Dendritic cell treated with granulocyte-macrophage colony-stimulating factor and Interleukin-4, amounts not matched to agents 40 ng/mL and 50 ng/mL, for 4 days (primary cell): ENCODE measurements at regions of chr22 and their contacts with region 1.

Region 1: DNA sequence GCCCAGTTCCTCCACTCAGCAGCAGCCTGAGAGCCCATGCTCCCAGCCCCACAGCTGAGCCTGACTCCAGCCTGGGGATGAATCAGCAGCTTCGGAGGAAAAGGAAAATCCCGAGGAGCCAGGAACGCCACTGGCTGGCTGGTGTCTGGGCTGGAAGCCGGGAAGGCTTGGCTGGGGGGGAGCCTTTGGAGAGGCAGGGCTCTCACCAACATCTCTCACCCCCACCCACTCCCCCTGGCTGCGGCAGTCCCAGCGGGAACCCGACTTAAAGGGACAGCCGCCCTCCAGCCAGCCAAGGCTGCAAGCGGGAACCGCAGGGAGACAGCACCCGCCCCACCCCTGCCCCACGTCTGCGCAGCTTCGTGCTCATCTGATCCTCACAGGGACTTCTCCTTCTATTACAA is 28.4 kb downstream of the KIAA0930 start:
- H3K4me3 Mint-ChIP-seq: peak overlapping the region; percentile 53
- H3K27ac Mint-ChIP-seq: peak overlapping the region; percentile 92
- H3K4me1 Mint-ChIP-seq: peaks cover 80% of the 10 kb centered on the region
- H3K27me3 Mint-ChIP-seq: no peaks in the 10 kb centered on the region

Region 2: GRCh38 chr22:45235101-45235777 is 22.9 kb after region 1 on chr22:
- intact Hi-C with region 1: loop called (anchors 2 kb)
- H3K4me3 Mint-ChIP-seq: peak overlapping the region; percentile 59
- H3K27ac Mint-ChIP-seq: peak overlapping the region; percentile 87
- H3K4me1 Mint-ChIP-seq: peaks cover 99% of the 10 kb centered on the region
- H3K27me3 Mint-ChIP-seq: no peaks in the 10 kb centered on the region